ENCODE measurements at regions of chr20 and their contacts with region 1.

Region 1: GRCh38 chr20:46520976-46521579 is 7.7 kb upstream of the ZNF334 start:
- DNase-seq: peak; percentile 25
- ATAC-seq: peak; percentile 91
- H3K4me3 ChIP-seq: no peak overlapping the region
- H3K27ac ChIP-seq: no peak overlapping the region
- H3K4me1 ChIP-seq: no peaks in the 10 kb centered on the region
- H3K27me3 ChIP-seq: no peaks in the 10 kb centered on the region; a peak in 1 of 4 replicates
- CTCF ChIP-seq: peak; percentile 73 to 93 (median 82)
- EP300 ChIP-seq: no peak
- POLR2A ChIP-seq: no peak
- RAD21 ChIP-seq: peak; percentile 91

Region 2: DNA sequence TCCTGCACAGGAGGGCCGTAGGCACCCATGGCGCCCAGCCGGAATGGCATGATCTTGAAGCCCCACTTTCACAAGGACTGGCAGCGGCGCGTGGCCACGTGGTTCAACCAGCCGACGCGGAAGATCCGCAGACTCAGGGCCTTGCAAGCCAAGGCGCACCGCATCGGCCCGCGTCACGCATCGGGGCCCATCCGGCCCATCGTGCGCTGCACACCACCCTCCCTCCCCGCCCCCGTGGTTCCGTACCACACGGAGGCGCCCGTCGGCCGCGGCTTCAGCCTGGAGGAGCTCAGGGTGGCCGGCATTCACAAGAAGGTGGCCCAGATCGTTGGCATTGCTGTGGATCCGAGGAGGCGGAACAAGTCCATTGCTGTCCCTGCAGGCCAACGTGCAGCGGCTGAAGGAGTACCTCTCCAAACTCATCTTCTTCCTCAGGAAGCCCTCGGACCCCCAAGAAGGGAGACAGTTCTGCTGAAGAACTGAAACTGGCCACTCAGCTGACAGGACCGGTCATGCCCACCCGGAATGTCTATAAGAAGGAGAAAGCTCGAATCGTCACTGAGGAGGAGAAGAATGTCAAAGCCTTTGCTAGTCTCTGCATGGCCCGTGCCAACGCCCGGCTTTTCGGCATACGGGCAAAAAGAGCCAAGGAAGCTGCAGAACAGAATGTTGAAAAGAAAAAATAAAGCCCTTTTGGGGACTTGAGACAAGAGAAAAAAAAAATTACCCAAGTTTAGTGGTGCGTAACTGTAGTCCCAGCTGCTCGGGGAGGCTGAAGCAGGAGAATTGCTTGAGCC is 421.4 kb before region 1 on chr20:
- CTCF ChIA-PET with region 1: no interaction called
- POLR2A ChIA-PET with region 1: no interaction called
- RAD21 ChIA-PET with region 1: no interaction called
- SMC1A ChIA-PET with region 1: no interaction called
- in situ Hi-C with region 1: no loop called
- intact Hi-C with region 1: no loop called
- DNase-seq: no peak
- ATAC-seq: peak; percentile 99
- H3K4me3 ChIP-seq: peak overlapping the region; percentile 45; the same call in 1 of the 2 replicates
- H3K27ac ChIP-seq: no peak overlapping the region
- H3K4me1 ChIP-seq: peaks cover 9% of the 10 kb centered on the region; the same call in 1 of the 2 replicates
- H3K27me3 ChIP-seq: no peaks in the 10 kb centered on the region; a peak in 1 of 4 replicates
- CTCF ChIP-seq: peak; percentile 35 to 68 (median 64); a peak in 4 of 6 replicates
- EP300 ChIP-seq: no peak
- POLR2A ChIP-seq: no peak
- RAD21 ChIP-seq: peak; percentile 65

Region 3: DNA sequence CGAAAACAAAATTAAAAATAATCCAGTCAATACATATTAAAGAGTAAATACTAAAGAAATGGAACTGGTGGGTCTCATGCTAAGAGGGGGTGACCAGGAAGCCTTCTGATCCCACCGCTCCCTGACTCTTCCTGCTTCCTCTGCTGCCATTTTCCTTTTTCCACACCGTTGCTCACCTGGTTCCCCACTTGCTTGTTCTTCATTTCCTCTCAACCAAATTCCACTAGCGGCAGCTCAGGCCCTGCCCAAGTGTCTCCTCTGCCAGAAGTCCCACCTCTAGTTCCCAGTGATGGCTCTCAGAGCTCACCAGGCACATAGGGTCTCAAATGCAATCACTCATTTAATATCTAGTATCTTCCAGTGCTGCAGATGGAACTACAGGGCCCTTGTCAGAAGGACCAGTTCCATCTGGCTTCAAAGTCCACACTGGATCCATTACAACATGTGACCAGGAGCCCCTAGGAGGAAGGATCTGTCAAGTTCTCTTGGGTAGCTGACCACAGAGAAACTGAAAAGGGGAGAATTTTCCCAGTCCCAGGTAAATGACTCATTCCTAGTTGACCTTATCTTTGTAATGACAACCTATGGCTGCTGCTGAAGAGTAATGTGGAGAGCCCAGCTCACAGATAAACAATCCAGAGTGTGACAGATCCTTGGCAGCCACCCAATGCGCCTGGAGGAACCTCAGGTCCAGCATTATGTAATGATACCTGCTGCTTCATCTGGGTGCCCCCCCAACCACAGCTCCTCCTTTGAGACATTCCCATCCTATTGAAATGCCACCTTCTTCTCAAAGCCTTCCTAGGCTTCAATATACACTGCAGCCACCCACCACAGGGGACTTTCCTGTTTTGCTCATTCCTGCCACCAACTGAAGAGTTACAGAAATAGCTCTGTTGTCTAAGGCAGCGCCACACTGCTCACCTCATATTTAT is 152.8 kb before region 1 on chr20:
- CTCF ChIA-PET with region 1: no interaction called
- POLR2A ChIA-PET with region 1: no interaction called
- RAD21 ChIA-PET with region 1: no interaction called
- SMC1A ChIA-PET with region 1: no interaction called
- in situ Hi-C with region 1: no loop called
- intact Hi-C with region 1: no loop called
- DNase-seq: no peak
- ATAC-seq: peak; percentile 8; the same call in 1 of the 3 replicates
- H3K4me3 ChIP-seq: no peak overlapping the region
- H3K27ac ChIP-seq: peak overlapping the region; percentile 42; the same call in 1 of the 2 replicates
- H3K4me1 ChIP-seq: no peaks in the 10 kb centered on the region
- H3K27me3 ChIP-seq: no peaks in the 10 kb centered on the region
- CTCF ChIP-seq: peak in 1 of 3 experiments; percentile 14; a peak in 1 of 6 replicates
- EP300 ChIP-seq: no peak
- POLR2A ChIP-seq: no peak
- RAD21 ChIP-seq: no peak

Region 4: GRCh38 chr20:46552460-46553420 is 31.7 kb after region 1 on chr20:
- CTCF ChIA-PET with region 1: interaction called, 11 read pairs
- POLR2A ChIA-PET with region 1: no interaction called
- RAD21 ChIA-PET with region 1: interaction called, 4 read pairs
- SMC1A ChIA-PET with region 1: interaction called, 10 read pairs
- in situ Hi-C with region 1: no loop called
- intact Hi-C with region 1: no loop called
- DNase-seq: peak; percentile 85
- ATAC-seq: peak; percentile 85
- H3K4me3 ChIP-seq: peak overlapping the region; percentile 50; the same call in 1 of the 2 replicates
- H3K27ac ChIP-seq: peak overlapping the region; percentile 76
- H3K4me1 ChIP-seq: peaks cover 70% of the 10 kb centered on the region
- H3K27me3 ChIP-seq: no peaks in the 10 kb centered on the region
- CTCF ChIP-seq: no peak
- EP300 ChIP-seq: peak; percentile 67 to 74; a peak in 3 of 4 replicates
- POLR2A ChIP-seq: no peak
- RAD21 ChIP-seq: no peak

Region 5: GRCh38 chr20:46562373-46563169 is 41.5 kb after region 1 on chr20:
- CTCF ChIA-PET with region 1: interaction called, 5 read pairs
- POLR2A ChIA-PET with region 1: no interaction called
- RAD21 ChIA-PET with region 1: interaction called, 5 read pairs
- SMC1A ChIA-PET with region 1: interaction called, 6 read pairs
- in situ Hi-C with region 1: no loop called
- intact Hi-C with region 1: loop called (anchors 2 kb)
- DNase-seq: no peak
- ATAC-seq: peak; percentile 94
- H3K4me3 ChIP-seq: no peak overlapping the region; the same call in 1 of the 2 replicates
- H3K27ac ChIP-seq: no peak overlapping the region
- H3K4me1 ChIP-seq: no peaks in the 10 kb centered on the region
- H3K27me3 ChIP-seq: no peaks in the 10 kb centered on the region
- CTCF ChIP-seq: peak; percentile 74 to 91 (median 79)
- EP300 ChIP-seq: no peak
- POLR2A ChIP-seq: no peak
- RAD21 ChIP-seq: peak; percentile 63

Region 6: GRCh38 chr20:46681032-46681854 is 160.2 kb after region 1 on chr20:
- CTCF ChIA-PET with region 1: interaction called, 114 read pairs
- POLR2A ChIA-PET with region 1: no interaction called
- RAD21 ChIA-PET with region 1: interaction called, 10 read pairs
- SMC1A ChIA-PET with region 1: interaction called, 43 read pairs
- in situ Hi-C with region 1: loop called (anchors 5 kb)
- intact Hi-C with region 1: loop called (anchors 1 kb)
- DNase-seq: peak; percentile 27
- ATAC-seq: peak; percentile 80
- H3K4me3 ChIP-seq: no peak overlapping the region
- H3K27ac ChIP-seq: no peak overlapping the region
- H3K4me1 ChIP-seq: peaks cover 13% of the 10 kb centered on the region
- H3K27me3 ChIP-seq: no peaks in the 10 kb centered on the region
- CTCF ChIP-seq: peak; percentile 81 to 86 (median 83)
- EP300 ChIP-seq: no peak
- POLR2A ChIP-seq: no peak
- RAD21 ChIP-seq: peak; percentile 74

Region 7: GRCh38 chr20:46689082-46689754 is 168.1 kb after region 1 on chr20 and contains the start of gene TP53RK:
- CTCF ChIA-PET with region 1: interaction called, 114 read pairs
- POLR2A ChIA-PET with region 1: no interaction called
- RAD21 ChIA-PET with region 1: no interaction called
- SMC1A ChIA-PET with region 1: interaction called, 5 read pairs
- in situ Hi-C with region 1: loop called (anchors 5 kb)
- intact Hi-C with region 1: no loop called
- DNase-seq: peak; percentile 97
- ATAC-seq: peak; percentile 97
- H3K4me3 ChIP-seq: peak within 1 kb of the TSS; percentile 78
- H3K27ac ChIP-seq: peak within 1 kb of the TSS; percentile 76
- H3K4me1 ChIP-seq: peaks cover 3% of the 10 kb centered on the region
- H3K27me3 ChIP-seq: no peaks in the 10 kb centered on the region
- CTCF ChIP-seq: peak in 1 of 3 experiments; percentile 26; a peak in 1 of 6 replicates
- EP300 ChIP-seq: no peak
- POLR2A ChIP-seq: peak; percentile 87
- RAD21 ChIP-seq: no peak
- polyA plus RNA-seq, gene TP53RK: 3.8 to 6.2 TPM

Region 8: DNA sequence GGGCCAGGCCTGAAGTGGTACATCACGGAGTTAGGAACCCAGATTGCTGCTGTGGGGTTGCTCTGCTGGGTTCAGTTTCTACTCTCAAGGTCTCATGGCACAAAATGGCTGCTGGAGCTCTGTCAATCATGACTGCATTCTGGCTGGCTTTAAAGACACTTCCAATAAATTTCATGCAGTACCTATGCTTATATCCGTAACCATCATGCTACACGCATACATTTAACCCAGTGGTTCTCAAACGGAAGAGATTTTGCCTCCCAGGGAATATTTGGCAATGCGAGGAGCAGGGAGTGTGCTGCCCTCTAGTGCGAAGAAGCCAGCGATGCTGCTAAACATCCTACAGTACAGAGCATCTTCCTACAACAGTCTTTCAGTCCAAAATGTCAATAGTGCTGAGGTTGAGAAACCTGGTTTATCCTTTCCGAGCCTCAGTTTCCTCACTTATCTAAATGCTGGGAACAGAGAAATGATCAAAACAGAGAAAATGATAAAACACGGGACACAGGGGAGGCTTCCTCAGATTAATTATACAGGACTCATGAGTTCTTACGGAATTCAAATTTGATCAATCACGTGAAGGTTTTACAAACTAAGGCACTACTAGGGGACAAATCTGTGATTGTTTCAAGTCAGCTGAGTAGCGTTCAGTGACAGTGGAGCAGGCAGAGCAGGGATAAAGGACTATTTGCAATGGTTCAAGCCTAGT is 178.7 kb after region 1 on chr20:
- CTCF ChIA-PET with region 1: no interaction called
- POLR2A ChIA-PET with region 1: no interaction called
- RAD21 ChIA-PET with region 1: no interaction called
- SMC1A ChIA-PET with region 1: no interaction called
- in situ Hi-C with region 1: no loop called
- intact Hi-C with region 1: loop called (anchors 1 kb)
- DNase-seq: no peak
- ATAC-seq: peak; percentile 65
- H3K4me3 ChIP-seq: no peak overlapping the region
- H3K27ac ChIP-seq: no peak overlapping the region
- H3K4me1 ChIP-seq: no peaks in the 10 kb centered on the region; the same call in 1 of the 2 replicates
- H3K27me3 ChIP-seq: no peaks in the 10 kb centered on the region
- CTCF ChIP-seq: peak; percentile 33 to 56 (median 55); a peak in 5 of 6 replicates
- EP300 ChIP-seq: no peak
- POLR2A ChIP-seq: no peak
- RAD21 ChIP-seq: peak; percentile 49

Measured in GM12878 (cell line).